IMR-90 (cell line): ENCODE measurements at regions of chr9 and their contacts with region 1.

Region 1: GRCh38 chr9:73565833-73566465 is 414.3 kb downstream of the ANXA1 start:
- DNase-seq: no peak
- ATAC-seq: no peak
- H3K4me3 ChIP-seq: no peak overlapping the region
- H3K27ac ChIP-seq: no peak overlapping the region
- H3K4me1 ChIP-seq: no peaks in the 10 kb centered on the region
- H3K27me3 ChIP-seq: no peaks in the 10 kb centered on the region
- CTCF ChIP-seq: 0 out of 2 replicates have a peak, but pooled peaks have one; percentile 6
- POLR2A ChIP-seq: no peak
- RAD21 ChIP-seq: no peak

Region 2: DNA sequence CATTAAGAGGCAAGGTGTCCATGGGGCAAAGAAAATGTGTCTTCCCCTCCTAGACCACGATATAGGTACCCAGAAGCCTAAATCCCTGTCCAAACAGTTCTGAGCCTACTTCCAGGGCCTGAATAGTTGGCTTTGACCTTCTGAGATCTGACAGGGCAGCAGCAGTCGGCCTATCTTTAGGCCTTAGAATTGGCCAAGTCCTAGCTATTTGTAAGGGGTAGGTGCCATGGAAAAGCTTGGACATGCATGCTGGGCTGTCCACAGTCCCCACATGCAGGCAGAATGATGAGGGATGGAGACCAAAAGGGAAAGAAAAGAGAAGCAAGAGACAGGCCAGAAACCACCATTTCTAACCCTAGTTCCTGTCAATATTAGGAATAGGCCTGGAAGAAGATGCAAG is 68.2 kb before region 1 on chr9:
- CTCF ChIA-PET with region 1: no interaction called
- POLR2A ChIA-PET with region 1: no interaction called
- dilution Hi-C with region 1: no loop called
- in situ Hi-C with region 1: loop called (anchors 10 kb)
- intact Hi-C with region 1: no loop called
- DNase-seq: no peak
- ATAC-seq: no peak
- H3K4me3 ChIP-seq: no peak overlapping the region
- H3K27ac ChIP-seq: no peak overlapping the region
- H3K4me1 ChIP-seq: no peaks in the 10 kb centered on the region
- H3K27me3 ChIP-seq: no peaks in the 10 kb centered on the region
- CTCF ChIP-seq: no peak
- POLR2A ChIP-seq: no peak
- RAD21 ChIP-seq: no peak